Activated B cell treated with CpG ODN at 0.5 μM for 24 hours (primary cell): ENCODE measurements at regions of chr12 and their contacts with region 1.

Region 1: DNA sequence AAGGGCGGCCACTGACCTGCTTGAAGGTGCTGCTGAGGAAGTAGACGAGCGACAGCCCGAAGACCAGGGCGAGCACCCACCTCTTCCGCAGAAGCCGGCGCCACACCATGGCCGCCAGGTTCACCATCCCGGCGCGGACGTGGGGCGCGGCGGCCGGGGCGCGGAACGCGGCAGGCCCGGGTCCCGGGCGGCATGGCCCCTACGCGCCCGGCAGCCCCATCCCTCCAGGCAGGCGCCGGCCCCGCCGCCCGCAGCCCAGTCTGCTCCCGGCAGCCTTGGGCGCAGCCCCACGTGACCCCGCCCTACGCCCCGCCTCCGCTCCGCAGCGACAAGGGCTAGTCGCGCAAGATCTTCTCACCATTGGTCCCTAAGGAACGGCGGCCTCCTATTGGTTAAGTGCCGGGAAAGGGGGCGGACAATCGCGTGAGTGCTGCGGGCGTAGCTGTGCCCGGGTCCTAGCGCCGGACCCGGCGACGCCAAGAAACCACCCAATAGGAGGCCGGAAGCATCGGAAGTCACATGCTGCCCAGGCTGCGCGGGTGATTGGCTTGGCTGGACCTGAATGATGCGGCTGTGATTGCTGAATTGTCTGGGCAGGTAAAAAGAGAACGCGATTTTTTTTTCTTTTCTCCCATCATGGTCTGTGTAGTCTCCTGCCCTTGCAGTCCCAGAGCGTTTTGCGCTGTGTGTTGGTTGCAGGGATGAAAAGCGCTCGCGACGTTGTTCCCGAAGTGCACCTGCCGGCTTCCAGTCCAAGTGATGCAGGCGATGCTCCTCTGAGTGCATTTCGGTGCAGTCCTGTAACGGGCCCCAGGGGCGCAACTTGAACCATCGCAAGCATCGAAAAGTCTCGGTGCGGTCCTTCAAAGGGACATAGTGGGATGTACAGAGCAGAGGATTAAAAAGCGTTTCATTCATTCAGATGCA is at the starts of genes RNFT2 and SPRING1:
- DNase-seq: peak; percentile 97
- ATAC-seq: peak; percentile 97
- H3K4me3 Mint-ChIP-seq: peak within 1 kb of the TSS; percentile 99
- H3K27ac Mint-ChIP-seq: peak within 1 kb of the TSS; percentile 90
- H3K4me1 Mint-ChIP-seq: peaks cover 31% of the 10 kb centered on the region
- H3K27me3 Mint-ChIP-seq: no peaks in the 10 kb centered on the region
- CTCF ChIP-seq: no peak
- total RNA-seq, gene RNFT2: 7.5 and 8.7 TPM in 2 replicates
- total RNA-seq, gene SPRING1: 31.6 and 36.4 TPM in 2 replicates

Region 2: GRCh38 chr12:116599285-116600136 is 138.5 kb before region 1 on chr12:
- CTCF ChIA-PET with region 1: no interaction called
- POLR2A ChIA-PET with region 1: no interaction called
- intact Hi-C with region 1: no loop called
- DNase-seq: peak; percentile 62
- ATAC-seq: peak; percentile 86
- H3K4me3 Mint-ChIP-seq: peak overlapping the region; percentile 45
- H3K27ac Mint-ChIP-seq: peak overlapping the region; percentile 18
- H3K4me1 Mint-ChIP-seq: peaks cover 28% of the 10 kb centered on the region
- H3K27me3 Mint-ChIP-seq: no peaks in the 10 kb centered on the region
- CTCF ChIP-seq: peak; percentile 35

Region 3: DNA sequence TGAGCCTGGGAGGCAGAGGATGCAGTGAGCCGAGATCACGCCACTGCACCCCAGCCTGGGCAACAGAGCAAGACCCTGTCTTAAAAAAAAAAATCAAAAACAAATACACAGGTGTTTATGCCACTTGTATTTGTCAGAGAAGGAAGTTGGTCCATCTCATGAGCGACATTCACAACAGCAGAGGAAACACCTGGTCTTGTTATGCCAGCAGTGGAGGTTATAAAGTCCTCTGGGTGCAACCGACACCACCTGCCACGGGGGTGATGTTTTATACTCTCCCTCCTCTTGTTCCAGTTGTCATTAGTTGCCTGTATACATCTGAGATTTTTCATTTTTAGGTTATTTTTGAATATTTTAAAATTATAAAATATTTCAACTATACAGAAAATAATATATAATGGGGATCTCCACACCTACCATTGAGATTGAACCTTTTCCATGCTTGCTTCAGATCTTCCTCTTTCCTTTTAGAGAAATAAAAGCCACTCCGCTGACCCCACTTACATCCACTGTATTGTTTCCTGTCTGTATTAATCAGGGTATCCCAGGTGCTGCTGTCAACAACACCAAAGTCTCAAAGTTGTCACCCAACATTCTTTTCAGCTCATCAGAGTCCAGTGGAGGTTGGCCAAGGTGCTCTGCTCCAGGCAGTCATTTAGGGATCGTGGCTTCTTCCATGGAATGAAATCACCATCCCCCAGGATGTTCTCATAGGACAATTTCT is 65.1 kb after region 1 on chr12:
- CTCF ChIA-PET with region 1: no interaction called
- POLR2A ChIA-PET with region 1: no interaction called
- intact Hi-C with region 1: loop called (anchors 5 kb)
- DNase-seq: no peak
- ATAC-seq: peak; percentile 81
- H3K4me3 Mint-ChIP-seq: peak overlapping the region; percentile 21
- H3K27ac Mint-ChIP-seq: peak overlapping the region; percentile 79
- H3K4me1 Mint-ChIP-seq: peaks cover 56% of the 10 kb centered on the region
- H3K27me3 Mint-ChIP-seq: no peaks in the 10 kb centered on the region
- CTCF ChIP-seq: no peak

Region 4: GRCh38 chr12:116861320-116861719 is 123.3 kb after region 1 on chr12:
- CTCF ChIA-PET with region 1: no interaction called
- POLR2A ChIA-PET with region 1: interaction called, 6 read pairs
- intact Hi-C with region 1: loop called (anchors 1 kb)
- DNase-seq: peak; percentile 44
- ATAC-seq: peak; percentile 72
- H3K4me3 Mint-ChIP-seq: peak overlapping the region; percentile 47
- H3K27ac Mint-ChIP-seq: peak overlapping the region; percentile 81
- H3K4me1 Mint-ChIP-seq: peaks cover 74% of the 10 kb centered on the region
- H3K27me3 Mint-ChIP-seq: no peaks in the 10 kb centered on the region
- CTCF ChIP-seq: no peak

Region 5: GRCh38 chr12:116910645-116911451 is 172.8 kb after region 1 on chr12 and contains the start of gene FBXW8:
- CTCF ChIA-PET with region 1: no interaction called
- POLR2A ChIA-PET with region 1: no interaction called
- intact Hi-C with region 1: loop called (anchors 1 kb)
- DNase-seq: peak; percentile 72
- ATAC-seq: peak; percentile 96
- H3K4me3 Mint-ChIP-seq: peak within 1 kb of the TSS; percentile 85
- H3K27ac Mint-ChIP-seq: peak within 1 kb of the TSS; percentile 65
- H3K4me1 Mint-ChIP-seq: peaks cover 33% of the 10 kb centered on the region
- H3K27me3 Mint-ChIP-seq: no peaks in the 10 kb centered on the region
- CTCF ChIP-seq: no peak
- total RNA-seq, gene FBXW8: 16.1 and 17.6 TPM in 2 replicates